Naive thymus-derived CD4-positive, alpha-beta T cell (primary cell): ENCODE measurements at regions of chr6 and their contacts with region 1.

Region 1: DNA sequence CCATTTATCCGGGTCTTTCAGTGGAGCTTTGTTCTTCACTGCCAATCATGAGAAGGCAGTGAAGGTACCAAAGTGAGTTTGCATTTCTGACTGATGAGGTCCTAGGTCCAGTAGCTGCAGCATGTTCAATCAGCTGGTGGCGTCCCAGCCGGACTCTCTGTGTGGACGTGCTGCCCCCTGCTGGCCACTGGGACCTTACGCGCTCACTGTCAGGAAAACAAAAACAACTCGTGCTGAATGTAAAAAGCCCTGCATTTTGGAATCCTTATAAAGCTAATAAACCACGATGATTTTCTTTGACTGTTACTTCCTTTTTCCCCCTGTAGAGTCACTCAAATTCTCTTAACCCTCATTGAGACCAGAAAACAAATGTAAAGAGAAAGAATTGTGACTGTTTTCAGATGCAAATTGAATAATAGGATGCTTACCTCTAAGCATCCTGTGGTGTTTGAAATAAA is 4.9 kb upstream of the CD24 start:
- DNase-seq: peak; percentile 40 to 78 (median 62)
- ATAC-seq: peak; percentile 87
- H3K4me3 ChIP-seq: no peak overlapping the region
- H3K4me3 Mint-ChIP-seq: no peak overlapping the region
- H3K27ac ChIP-seq: no peak overlapping the region
- H3K27ac Mint-ChIP-seq: no peak overlapping the region
- H3K4me1 ChIP-seq: no peaks in the 10 kb centered on the region
- H3K4me1 Mint-ChIP-seq: peaks cover 0 to 7% (median 3%) of the 10 kb centered on the region in 7 donors
- H3K27me3 ChIP-seq: peaks cover 0 to 3% of the 10 kb centered on the region in 2 donors
- H3K27me3 Mint-ChIP-seq: peaks cover 28 to 56% (median 41%) of the 10 kb centered on the region in 5 donors

Region 2: DNA sequence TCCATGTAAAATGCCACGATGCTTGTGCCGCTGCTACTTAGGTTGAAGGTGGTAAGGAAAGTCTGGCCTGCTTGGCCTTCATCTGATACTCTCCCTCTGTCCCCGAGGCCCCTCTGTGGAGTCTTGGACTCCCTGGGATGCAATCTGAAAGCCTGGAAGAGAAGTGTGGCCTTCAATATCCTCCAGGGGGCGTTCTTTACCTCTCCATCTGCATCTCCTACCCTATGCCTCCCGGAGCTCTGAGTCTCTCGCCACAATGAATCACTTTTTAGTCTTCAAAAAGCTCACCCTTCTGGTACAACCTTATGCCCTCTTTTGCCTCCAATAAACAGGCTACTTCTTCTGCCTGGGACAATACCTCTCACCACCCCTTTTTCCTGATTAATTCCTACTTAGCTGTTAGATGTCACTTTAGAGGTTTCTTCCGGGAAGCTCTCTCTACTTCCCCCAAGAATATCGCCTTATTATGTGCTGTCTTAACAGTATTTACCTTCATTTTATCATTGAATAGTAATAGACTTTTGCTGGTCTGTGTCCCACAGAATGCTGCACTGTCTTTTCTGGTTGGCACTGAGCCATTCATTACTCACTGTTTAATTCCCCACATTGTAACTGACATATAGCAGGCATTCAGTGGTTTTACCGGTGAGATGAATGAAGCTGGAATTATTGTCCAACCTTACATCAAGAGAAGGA is 640.0 kb before region 1 on chr6:
- CTCF ChIA-PET with region 1: interaction called, 6 read pairs
- POLR2A ChIA-PET with region 1: no interaction called
- intact Hi-C with region 1: loop called (anchors 1 kb)
- DNase-seq: peak in 8 of 9 donors; percentile 19 to 50 (median 35)
- ATAC-seq: peak; percentile 88
- H3K4me3 ChIP-seq: no peak overlapping the region
- H3K4me3 Mint-ChIP-seq: peak overlapping the region in 7 of 10 donors; percentile 15 to 67 (median 44)
- H3K27ac ChIP-seq: no peak overlapping the region
- H3K27ac Mint-ChIP-seq: no peak overlapping the region
- H3K4me1 ChIP-seq: no peaks in the 10 kb centered on the region
- H3K4me1 Mint-ChIP-seq: peaks cover 0 to 9% (median 6%) of the 10 kb centered on the region in 7 donors
- H3K27me3 ChIP-seq: no peaks in the 10 kb centered on the region
- H3K27me3 Mint-ChIP-seq: peaks cover 14 to 44% (median 20%) of the 10 kb centered on the region in 5 donors

Region 3: GRCh38 chr6:106360410-106360988 is 619.0 kb before region 1 on chr6 and contains the start of gene CRYBG1:
- CTCF ChIA-PET with region 1: no interaction called
- POLR2A ChIA-PET with region 1: no interaction called
- intact Hi-C with region 1: loop called in 1 of 2 experiments (anchors 1 kb)
- DNase-seq: peak; percentile 60 to 75 (median 72)
- ATAC-seq: peak; percentile 95
- H3K4me3 ChIP-seq: peak within 1 kb of the TSS; percentile 45
- H3K4me3 Mint-ChIP-seq: peak within 1 kb of the TSS; percentile 71 to 86 (median 78)
- H3K27ac ChIP-seq: no peak within 1 kb of the TSS
- H3K27ac Mint-ChIP-seq: peak within 1 kb of the TSS in 2 of 9 donors; percentile 15 to 43
- H3K4me1 ChIP-seq: peaks cover 7 to 8% of the 10 kb centered on the region in 2 donors
- H3K4me1 Mint-ChIP-seq: peaks cover 5 to 15% (median 10%) of the 10 kb centered on the region in 7 donors
- H3K27me3 ChIP-seq: peaks cover 3 to 20% of the 10 kb centered on the region in 2 donors
- H3K27me3 Mint-ChIP-seq: peaks cover 34 to 62% (median 55%) of the 10 kb centered on the region in 5 donors
- total RNA-seq, gene CRYBG1: 18.0 to 39.8 (median 34.6) TPM

Region 4: DNA sequence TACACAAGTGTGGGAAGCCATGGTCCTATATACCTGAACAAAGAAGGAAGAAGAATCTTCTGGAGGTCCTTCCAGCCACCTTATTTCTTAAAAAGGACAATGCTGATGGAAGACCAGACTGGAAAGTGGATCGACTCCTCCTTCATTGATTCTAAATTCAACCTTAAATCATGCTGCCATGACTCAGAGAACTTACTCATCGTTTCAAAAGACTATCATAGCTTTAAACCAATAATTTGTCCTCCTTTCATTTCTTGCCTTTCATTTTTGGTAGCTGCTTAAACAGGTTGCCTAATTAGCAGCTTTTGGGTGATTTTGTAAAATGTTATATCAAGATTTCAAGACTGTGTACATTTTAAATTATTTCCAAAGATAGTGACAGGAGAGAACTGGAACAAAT is 410.9 kb before region 1 on chr6:
- CTCF ChIA-PET with region 1: interaction called, 8 read pairs
- POLR2A ChIA-PET with region 1: no interaction called
- intact Hi-C with region 1: loop called (anchors 1 kb)
- DNase-seq: no peak
- ATAC-seq: no peak
- H3K4me3 ChIP-seq: no peak overlapping the region
- H3K4me3 Mint-ChIP-seq: no peak overlapping the region
- H3K27ac ChIP-seq: no peak overlapping the region
- H3K27ac Mint-ChIP-seq: peak overlapping the region in 4 of 9 donors; percentile 3 to 52 (median 29)
- H3K4me1 ChIP-seq: no peaks in the 10 kb centered on the region
- H3K4me1 Mint-ChIP-seq: peaks cover 0 to 6% (median 0%) of the 10 kb centered on the region in 7 donors
- H3K27me3 ChIP-seq: no peaks in the 10 kb centered on the region
- H3K27me3 Mint-ChIP-seq: no peaks in the 10 kb centered on the region

Region 5: GRCh38 chr6:106608062-106608668 is 371.3 kb before region 1 on chr6:
- CTCF ChIA-PET with region 1: interaction called, 5 read pairs
- POLR2A ChIA-PET with region 1: no interaction called
- intact Hi-C with region 1: loop called (anchors 1 kb)
- DNase-seq: peak in 6 of 9 donors; percentile 15 to 48 (median 42)
- ATAC-seq: peak; percentile 83
- H3K4me3 ChIP-seq: no peak overlapping the region
- H3K4me3 Mint-ChIP-seq: no peak overlapping the region
- H3K27ac ChIP-seq: no peak overlapping the region
- H3K27ac Mint-ChIP-seq: no peak overlapping the region
- H3K4me1 ChIP-seq: no peaks in the 10 kb centered on the region
- H3K4me1 Mint-ChIP-seq: peaks cover 0 to 12% (median 4%) of the 10 kb centered on the region in 7 donors
- H3K27me3 ChIP-seq: no peaks in the 10 kb centered on the region
- H3K27me3 Mint-ChIP-seq: no peaks in the 10 kb centered on the region